ENCODE measurements at regions of chr1 and their contacts with region 1.

Region 1: DNA sequence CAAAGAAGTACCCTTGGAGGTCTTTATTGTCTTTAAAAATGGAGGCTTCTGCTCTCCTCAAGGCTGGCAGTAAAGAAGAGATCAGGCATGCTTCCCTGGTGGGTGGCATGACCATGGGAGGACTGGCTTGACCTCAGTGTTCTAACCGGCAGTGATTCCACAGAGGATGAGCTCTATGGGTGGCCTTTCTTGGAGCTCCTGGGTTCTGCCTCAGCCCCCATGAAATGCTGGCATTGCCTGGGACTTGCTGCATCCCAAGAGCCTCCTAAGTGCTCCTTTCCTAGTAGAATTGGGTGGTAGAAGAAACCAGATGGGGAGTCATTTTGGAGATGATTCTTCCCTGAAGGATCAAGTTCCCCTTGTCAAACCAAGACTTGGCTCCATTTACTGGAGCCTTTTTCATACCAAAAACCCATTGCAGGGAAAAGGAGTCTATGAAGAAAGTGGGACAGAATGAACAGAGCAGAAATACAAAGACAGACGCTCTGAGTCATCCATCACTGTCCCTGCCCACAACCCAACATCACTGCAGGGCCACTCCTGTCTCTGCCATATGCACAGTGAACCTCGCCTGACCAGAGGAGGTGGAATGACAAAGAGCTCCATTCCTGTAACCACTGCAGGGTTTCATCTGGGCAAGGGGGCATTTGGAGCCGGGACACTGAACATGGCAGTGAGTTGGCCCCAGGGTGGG is 42.4 kb downstream of the RIMS3 start:
- DNase-seq: no peak
- ATAC-seq: no peak

Region 2: GRCh38 chr1:39754906-39755504 is 868.1 kb before region 1 on chr1:
- intact Hi-C with region 1: loop called (anchors 5 kb)
- DNase-seq: no peak
- ATAC-seq: no peak